ENCODE measurements at regions of chr11 and their contacts with region 1.

Region 1: GRCh38 chr11:61627567-61628445 is 46.9 kb upstream of the SYT7 start:
- DNase-seq: peak; percentile 55
- H3K4me3 ChIP-seq: no peak overlapping the region
- H3K27ac ChIP-seq: no peak overlapping the region
- H3K4me1 ChIP-seq: no peaks in the 10 kb centered on the region
- H3K27me3 ChIP-seq: no peaks in the 10 kb centered on the region
- CTCF ChIP-seq: peak; percentile 82 to 92
- POLR2A ChIP-seq: no peak

Region 2: DNA sequence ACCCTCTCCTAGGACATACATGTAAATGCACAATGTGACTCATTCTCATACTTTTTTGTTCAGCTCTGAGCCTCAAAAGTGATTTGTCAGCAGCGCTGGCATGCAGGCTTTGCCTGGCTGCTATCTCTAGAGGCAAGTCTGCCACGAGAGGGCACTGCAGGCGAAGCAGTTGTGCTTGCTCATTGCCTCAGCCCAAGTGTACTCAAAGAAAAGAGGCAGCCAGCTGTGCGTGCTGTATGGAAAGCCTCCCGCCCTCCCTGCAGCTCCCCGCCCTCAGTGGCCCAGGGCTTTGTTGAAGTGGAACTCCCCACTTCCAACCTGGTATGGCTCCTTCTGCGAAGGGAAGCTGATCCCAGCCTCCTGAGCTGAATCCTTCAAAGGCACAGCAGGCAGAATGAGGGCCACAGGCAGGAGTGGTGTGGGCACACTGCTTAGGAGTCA is 181.6 kb before region 1 on chr11:
- CTCF ChIA-PET with region 1: interaction called, 29 read pairs
- POLR2A ChIA-PET with region 1: no interaction called
- dilution Hi-C with region 1: no loop called
- intact Hi-C with region 1: loop called (anchors 1 kb)
- DNase-seq: peak; percentile 93
- H3K4me3 ChIP-seq: no peak overlapping the region
- H3K27ac ChIP-seq: no peak overlapping the region
- H3K4me1 ChIP-seq: no peaks in the 10 kb centered on the region
- H3K27me3 ChIP-seq: no peaks in the 10 kb centered on the region
- CTCF ChIP-seq: peak; percentile 91 to 94
- POLR2A ChIP-seq: no peak

Region 3: GRCh38 chr11:61532139-61533038 is 95.4 kb before region 1 on chr11:
- CTCF ChIA-PET with region 1: interaction called, 5 read pairs
- POLR2A ChIA-PET with region 1: no interaction called
- dilution Hi-C with region 1: no loop called
- intact Hi-C with region 1: loop called (anchors 1 kb)
- DNase-seq: peak; percentile 25
- H3K4me3 ChIP-seq: no peak overlapping the region
- H3K27ac ChIP-seq: no peak overlapping the region
- H3K4me1 ChIP-seq: no peaks in the 10 kb centered on the region
- H3K27me3 ChIP-seq: no peaks in the 10 kb centered on the region
- CTCF ChIP-seq: peak; percentile 76 to 88
- POLR2A ChIP-seq: no peak

Region 4: DNA sequence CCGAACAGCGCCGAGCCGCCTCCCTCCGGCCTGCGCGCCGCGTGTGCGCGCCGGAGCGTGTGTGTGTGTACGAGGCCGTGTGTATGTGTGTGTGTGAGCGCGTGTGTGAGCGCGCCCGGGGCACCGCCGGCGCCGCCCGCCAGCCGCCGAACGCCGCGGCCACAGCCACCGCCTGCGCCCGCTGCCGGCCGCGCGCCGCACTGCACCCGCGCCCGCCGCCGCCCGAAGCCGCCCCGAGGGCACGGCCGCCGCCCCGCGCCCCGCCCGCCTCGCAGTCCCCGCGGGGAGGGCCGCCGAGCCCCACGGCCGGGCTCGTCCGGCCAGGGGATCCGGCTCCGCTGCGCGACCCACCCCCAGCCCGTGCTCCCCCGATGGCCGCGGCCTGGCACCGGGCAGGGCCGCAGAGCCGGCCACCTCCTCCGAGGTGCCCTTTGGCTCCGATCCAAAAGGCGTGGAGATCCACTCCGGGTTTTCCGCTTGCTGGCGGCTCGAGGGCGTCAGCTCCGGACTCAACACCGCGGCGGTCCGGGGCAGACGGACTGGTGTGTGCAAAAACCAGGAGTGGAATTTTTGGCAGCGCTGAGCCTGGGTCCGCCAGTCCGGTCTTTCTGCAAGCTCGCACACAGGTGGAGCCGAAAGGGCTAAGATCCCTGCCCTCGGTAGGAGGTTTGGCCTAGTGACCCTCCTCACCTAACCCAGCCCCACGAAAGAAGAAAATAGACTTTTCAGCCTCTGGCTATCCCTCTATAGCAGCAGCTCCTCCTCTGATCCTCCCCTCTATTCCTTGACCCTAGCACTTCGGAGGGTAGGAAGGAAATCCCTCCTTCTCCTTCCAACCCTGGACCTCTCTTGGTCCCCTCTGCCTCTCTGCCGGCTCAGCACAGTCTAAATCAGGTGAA is 46.5 kb before region 1 on chr11 and contains the start of gene SYT7:
- CTCF ChIA-PET with region 1: interaction called, 5 read pairs
- POLR2A ChIA-PET with region 1: no interaction called
- dilution Hi-C with region 1: no loop called
- intact Hi-C with region 1: loop called (anchors 1 kb)
- DNase-seq: peak; percentile 94
- H3K4me3 ChIP-seq: peak within 1 kb of the TSS in 1 of 3 experiments; percentile 22
- H3K27ac ChIP-seq: no peak within 1 kb of the TSS
- H3K4me1 ChIP-seq: no peaks in the 10 kb centered on the region
- H3K27me3 ChIP-seq: peaks cover 25 to 32% of the 10 kb centered on the region in 2 experiments
- CTCF ChIP-seq: peak in 1 of 2 donors; percentile 21
- POLR2A ChIP-seq: no peak
- total RNA-seq, gene SYT7: 0.55 and 0.78 TPM in 2 replicates

Region 5: DNA sequence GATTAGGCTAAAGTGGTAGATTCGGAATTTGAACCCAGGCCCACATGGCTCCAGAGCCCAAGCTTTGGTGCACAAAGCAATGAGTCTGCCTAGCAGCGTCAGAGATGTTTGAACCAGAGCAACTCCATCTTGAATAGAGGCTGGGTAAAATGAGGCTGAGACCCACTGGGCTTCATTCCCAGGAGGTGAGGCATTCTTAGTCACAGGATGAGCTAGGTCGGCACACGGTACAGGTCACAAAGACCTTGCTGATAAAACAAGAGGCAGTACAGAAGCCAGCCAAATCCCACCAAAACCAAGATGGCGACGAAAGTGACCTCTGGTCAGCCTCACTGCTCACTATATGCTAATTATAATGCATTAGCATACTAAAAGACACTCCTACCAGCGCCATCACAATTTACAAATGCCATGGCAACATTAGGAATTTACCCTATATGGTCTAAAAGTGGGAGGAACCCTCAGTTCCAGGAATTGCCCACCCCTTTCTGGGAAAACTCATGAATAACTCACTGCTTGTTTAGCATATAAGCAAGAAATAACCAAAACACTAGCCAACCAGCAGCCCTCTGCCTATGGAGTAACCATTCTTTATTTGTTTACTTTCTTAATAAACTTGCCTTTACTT is 12.1 kb after region 1 on chr11:
- CTCF ChIA-PET with region 1: interaction called, 24 read pairs
- POLR2A ChIA-PET with region 1: no interaction called
- dilution Hi-C with region 1: no loop called
- intact Hi-C with region 1: no loop called
- DNase-seq: no peak
- H3K4me3 ChIP-seq: no peak overlapping the region
- H3K27ac ChIP-seq: no peak overlapping the region
- H3K4me1 ChIP-seq: no peaks in the 10 kb centered on the region
- H3K27me3 ChIP-seq: no peaks in the 10 kb centered on the region
- CTCF ChIP-seq: no peak
- POLR2A ChIP-seq: no peak

Measured in endothelial cell of umbilical vein (primary cell).